Activated naive CD4-positive, alpha-beta T cell treated with anti-CD3 and anti-CD28 coated beads for 36 hours (primary cell): ENCODE measurements at regions of chr2 and their contacts with region 1.

Region 1: GRCh38 chr2:233353769-233354499 is at the start of gene DGKD:
- DNase-seq: peak; percentile 71
- H3K4me3 Mint-ChIP-seq: peak within 1 kb of the TSS; percentile 87
- H3K27ac Mint-ChIP-seq: peak within 1 kb of the TSS; percentile 70
- H3K4me1 Mint-ChIP-seq: peaks cover 63% of the 10 kb centered on the region
- H3K27me3 Mint-ChIP-seq: no peaks in the 10 kb centered on the region
- total RNA-seq, gene DGKD: 68.9 to 72.3 TPM

Region 2: DNA sequence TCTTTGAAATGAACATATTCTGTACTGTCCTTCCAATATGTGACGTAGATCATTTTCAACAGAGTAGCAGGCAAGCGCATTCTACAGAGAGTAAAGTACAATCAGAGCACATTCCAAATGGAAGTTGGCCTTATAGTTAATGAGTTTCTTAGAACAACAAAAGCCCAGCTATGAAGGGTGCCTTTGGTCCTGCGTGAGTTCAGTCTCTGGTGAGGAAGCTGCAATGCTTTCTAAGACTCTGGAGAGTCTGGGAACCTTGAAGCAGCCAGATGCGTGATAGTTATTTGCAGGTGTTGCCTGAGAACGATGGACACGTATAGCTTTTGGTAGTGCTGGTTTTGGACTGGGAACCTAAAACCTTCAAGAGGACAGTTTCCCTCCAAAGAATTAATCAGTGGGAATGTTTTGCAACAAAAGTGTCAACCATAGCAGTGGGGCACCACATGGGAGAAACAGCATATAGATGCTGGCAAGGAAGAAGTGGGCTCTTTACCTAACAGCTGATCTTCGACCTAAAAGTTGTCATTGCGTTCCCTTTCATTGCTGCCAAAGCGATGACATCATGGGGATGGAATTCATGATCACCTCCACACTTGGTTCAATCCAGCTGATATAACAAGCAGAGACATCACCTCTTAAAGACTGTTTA is 493.2 kb before region 1 on chr2:
- CTCF ChIA-PET with region 1: no interaction called
- intact Hi-C with region 1: no loop called
- DNase-seq: no peak
- H3K4me3 Mint-ChIP-seq: no peak overlapping the region
- H3K27ac Mint-ChIP-seq: no peak overlapping the region
- H3K4me1 Mint-ChIP-seq: peaks cover 2% of the 10 kb centered on the region
- H3K27me3 Mint-ChIP-seq: no peaks in the 10 kb centered on the region

Region 3: GRCh38 chr2:233331536-233331935 is 22.4 kb before region 1 on chr2:
- CTCF ChIA-PET with region 1: interaction called, 4 read pairs
- intact Hi-C with region 1: loop called (anchors 2 kb)
- DNase-seq: peak; percentile 78
- H3K4me3 Mint-ChIP-seq: peak overlapping the region; percentile 63
- H3K27ac Mint-ChIP-seq: peak overlapping the region; percentile 88
- H3K4me1 Mint-ChIP-seq: peaks cover 20% of the 10 kb centered on the region
- H3K27me3 Mint-ChIP-seq: no peaks in the 10 kb centered on the region

Region 4: DNA sequence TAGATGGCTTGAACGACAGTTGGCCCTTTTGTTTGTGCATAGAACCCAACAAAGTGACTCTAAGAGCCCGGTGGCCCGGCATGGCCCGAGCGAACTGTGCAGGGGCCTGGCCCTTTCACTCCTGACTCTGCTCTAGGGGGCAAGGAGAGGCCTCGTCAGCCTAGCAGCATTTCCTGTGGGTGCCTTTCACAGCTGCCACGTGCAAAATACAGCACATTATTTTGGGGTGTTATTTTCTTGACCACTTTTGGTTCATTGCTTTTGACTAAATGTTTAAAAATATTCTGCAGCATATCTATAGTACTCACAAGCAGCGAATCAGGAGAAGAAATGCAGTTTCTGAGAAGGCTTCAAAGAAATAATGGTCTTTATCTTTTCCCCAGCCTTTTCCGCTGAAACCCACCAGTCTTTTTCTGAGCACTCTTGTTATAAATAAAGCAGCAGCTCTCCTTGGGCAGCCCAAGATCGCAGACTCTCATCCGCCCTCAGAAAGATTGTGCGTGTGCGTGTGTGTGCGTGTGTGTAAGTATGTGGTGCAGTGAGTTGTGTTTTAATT is 31.6 kb after region 1 on chr2:
- CTCF ChIA-PET with region 1: interaction called, 4 read pairs
- intact Hi-C with region 1: loop called (anchors 2 kb)
- DNase-seq: peak; percentile 38
- H3K4me3 Mint-ChIP-seq: peak overlapping the region; percentile 36
- H3K27ac Mint-ChIP-seq: peak overlapping the region; percentile 69
- H3K4me1 Mint-ChIP-seq: peaks cover 63% of the 10 kb centered on the region
- H3K27me3 Mint-ChIP-seq: no peaks in the 10 kb centered on the region

Region 5: GRCh38 chr2:233430081-233430480 is 76.1 kb after region 1 on chr2:
- CTCF ChIA-PET with region 1: no interaction called
- intact Hi-C with region 1: no loop called
- DNase-seq: no peak
- H3K4me3 Mint-ChIP-seq: no peak overlapping the region
- H3K27ac Mint-ChIP-seq: no peak overlapping the region
- H3K4me1 Mint-ChIP-seq: peaks cover 60% of the 10 kb centered on the region
- H3K27me3 Mint-ChIP-seq: no peaks in the 10 kb centered on the region

Region 6: DNA sequence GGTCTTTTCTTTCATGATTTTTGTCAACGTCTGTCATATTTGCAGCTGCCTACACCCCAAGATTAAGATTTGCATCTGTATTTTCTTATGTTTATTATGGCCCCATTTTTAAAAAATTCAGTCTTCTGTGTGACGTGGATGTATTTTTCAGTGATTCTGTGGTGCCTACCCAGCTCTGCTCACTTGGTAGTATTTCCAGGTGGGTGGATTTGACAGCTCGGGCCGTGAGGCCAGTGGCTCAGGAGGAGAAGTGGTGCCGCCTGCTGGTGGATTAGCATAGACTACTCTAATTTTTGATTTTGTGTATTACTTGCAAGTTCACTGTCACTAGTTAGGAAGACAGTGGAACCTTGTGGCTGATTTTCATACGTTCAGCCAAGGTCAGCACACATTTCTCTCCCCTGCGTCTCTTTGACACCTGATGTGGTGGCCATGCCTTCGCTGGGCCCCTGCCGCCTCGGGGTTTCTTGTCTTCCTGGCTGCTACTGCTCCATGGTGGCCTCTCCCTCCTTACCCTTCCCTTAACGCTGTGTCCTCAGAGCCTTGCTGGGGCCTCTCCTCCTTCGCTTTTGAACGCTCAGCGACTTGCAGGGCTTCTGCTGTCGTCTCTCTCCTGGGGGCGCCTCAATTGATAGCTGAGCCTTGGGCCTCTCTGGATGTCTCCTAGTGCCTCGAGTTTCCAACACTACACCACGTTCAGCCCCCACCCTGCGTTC is 89.7 kb after region 1 on chr2:
- CTCF ChIA-PET with region 1: interaction called, 4 read pairs
- intact Hi-C with region 1: loop called (anchors 1 kb)
- DNase-seq: peak; percentile 91
- H3K4me3 Mint-ChIP-seq: no peak overlapping the region
- H3K27ac Mint-ChIP-seq: peak overlapping the region; percentile 30
- H3K4me1 Mint-ChIP-seq: peaks cover 16% of the 10 kb centered on the region
- H3K27me3 Mint-ChIP-seq: no peaks in the 10 kb centered on the region

Region 7: GRCh38 chr2:233566141-233566960 is 212.4 kb after region 1 on chr2 and contains the start of gene USP40:
- CTCF ChIA-PET with region 1: no interaction called
- intact Hi-C with region 1: loop called (anchors 5 kb)
- DNase-seq: peak; percentile 75
- H3K4me3 Mint-ChIP-seq: peak within 1 kb of the TSS; percentile 92
- H3K27ac Mint-ChIP-seq: peak within 1 kb of the TSS; percentile 92
- H3K4me1 Mint-ChIP-seq: peaks cover 9% of the 10 kb centered on the region
- H3K27me3 Mint-ChIP-seq: no peaks in the 10 kb centered on the region
- total RNA-seq, gene USP40: 15.3 to 17.5 TPM